K562 (cell line): ENCODE measurements at regions of chr5 and their contacts with region 1.

Region 1: GRCh38 chr5:53291047-53291927 is 181.7 kb upstream of the MOCS2 start:
- DNase-seq: no peak
- ATAC-seq: no peak
- H3K4me3 ChIP-seq: no peak overlapping the region
- H3K27ac ChIP-seq: no peak overlapping the region
- H3K4me1 ChIP-seq: no peaks in the 10 kb centered on the region
- H3K27me3 ChIP-seq: peaks cover 0 to 4% of the 10 kb centered on the region in 2 experiments; a peak in 1 of 5 replicates
- CTCF ChIP-seq: no peak
- EP300 ChIP-seq: no peak
- POLR2A ChIP-seq: no peak
- RAD21 ChIP-seq: no peak

Region 2: DNA sequence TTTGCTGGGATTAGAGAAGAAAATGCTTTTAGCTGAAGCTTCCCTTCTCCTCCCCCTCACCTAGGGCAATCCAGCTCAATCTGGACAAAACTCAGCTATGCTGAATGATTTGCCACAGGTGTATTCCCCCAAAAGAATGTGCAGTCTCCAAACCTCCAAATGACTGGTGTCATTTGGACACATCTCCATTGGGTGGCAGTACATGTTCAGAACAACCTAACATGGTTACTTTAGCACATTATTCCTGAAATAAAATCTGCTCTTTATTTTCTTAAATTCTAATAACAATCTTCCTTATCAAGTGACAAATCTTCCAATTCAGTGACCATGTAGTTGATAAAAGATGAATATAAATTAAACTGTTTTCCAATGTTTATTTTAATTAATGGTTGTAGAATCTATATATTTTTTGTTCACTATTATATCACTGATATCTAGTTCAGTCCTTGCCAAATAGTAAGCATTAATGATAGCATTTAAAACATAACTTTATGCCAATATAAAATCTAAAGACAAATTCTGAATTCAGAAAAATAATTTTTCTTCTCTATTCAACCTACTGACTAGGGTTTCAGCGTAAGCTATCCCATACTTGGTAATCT is 120.4 kb before region 1 on chr5:
- CTCF ChIA-PET with region 1: no interaction called
- POLR2A ChIA-PET with region 1: no interaction called
- in situ Hi-C with region 1: no loop called
- intact Hi-C with region 1: loop called (anchors 2 kb)
- DNase-seq: peak in 3 of 4 experiments; percentile 11 to 46 (median 24)
- ATAC-seq: peak; percentile 84
- H3K4me3 ChIP-seq: no peak overlapping the region
- H3K27ac ChIP-seq: no peak overlapping the region
- H3K4me1 ChIP-seq: no peaks in the 10 kb centered on the region
- H3K27me3 ChIP-seq: no peaks in the 10 kb centered on the region
- CTCF ChIP-seq: peak; percentile 55 to 68 (median 59); a peak in 5 of 6 replicates
- EP300 ChIP-seq: no peak
- POLR2A ChIP-seq: no peak
- RAD21 ChIP-seq: peak; percentile 70 to 75

Region 3: DNA sequence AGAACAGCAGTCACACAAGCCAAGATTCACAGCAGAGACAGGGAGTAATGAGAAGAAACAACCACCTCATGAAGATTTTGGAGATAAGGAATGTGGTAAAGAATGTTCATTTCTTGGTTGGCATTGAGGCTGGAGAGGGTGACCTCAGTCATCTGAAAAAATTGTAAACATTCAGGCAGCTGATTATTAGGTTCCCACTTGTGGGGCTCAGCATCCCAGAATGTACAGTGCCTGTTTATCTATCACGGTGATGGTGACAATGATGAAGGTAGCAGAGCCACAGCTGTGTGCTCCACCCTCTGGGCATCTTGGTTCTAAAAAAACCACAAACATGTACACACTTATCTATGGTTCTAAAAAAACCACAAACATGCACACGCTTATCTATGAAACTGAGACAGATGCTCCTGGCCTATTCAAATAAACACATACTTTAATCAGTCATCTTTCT is 37.8 kb before region 1 on chr5:
- CTCF ChIA-PET with region 1: no interaction called
- POLR2A ChIA-PET with region 1: no interaction called
- in situ Hi-C with region 1: no loop called
- intact Hi-C with region 1: no loop called
- DNase-seq: peak in 1 of 4 experiments; percentile 15
- ATAC-seq: no peak
- H3K4me3 ChIP-seq: no peak overlapping the region
- H3K27ac ChIP-seq: no peak overlapping the region
- H3K4me1 ChIP-seq: no peaks in the 10 kb centered on the region
- H3K27me3 ChIP-seq: peaks cover 0 to 6% of the 10 kb centered on the region in 2 experiments; a peak in 1 of 5 replicates
- CTCF ChIP-seq: no peak
- EP300 ChIP-seq: no peak
- POLR2A ChIP-seq: no peak
- RAD21 ChIP-seq: no peak

Region 4: GRCh38 chr5:53482717-53483638 is 191.7 kb after region 1 on chr5:
- CTCF ChIA-PET with region 1: no interaction called
- POLR2A ChIA-PET with region 1: no interaction called
- in situ Hi-C with region 1: no loop called
- intact Hi-C with region 1: no loop called
- DNase-seq: peak in 3 of 4 experiments; percentile 9 to 44 (median 29)
- ATAC-seq: peak; percentile 59
- H3K4me3 ChIP-seq: no peak overlapping the region
- H3K27ac ChIP-seq: no peak overlapping the region
- H3K4me1 ChIP-seq: peaks cover 0 to 30% of the 10 kb centered on the region in 2 experiments; a peak in 2 of 5 replicates
- H3K27me3 ChIP-seq: peaks cover 33 to 38% of the 10 kb centered on the region in 2 experiments
- CTCF ChIP-seq: peak; percentile 20 to 48 (median 35); a peak in 5 of 6 replicates
- EP300 ChIP-seq: no peak
- POLR2A ChIP-seq: no peak
- RAD21 ChIP-seq: peak; percentile 22 to 60